Activated T-helper 1 cell treated with anti-CD3 and anti-CD28 coated beads, Interleukin-12 subunit alpha, Interleukin-12 subunit beta, Interleukin-2, Interleukin-4 antibody, amounts not matched to agents 30 ng/mL and 10 ng/mL and 1 ng/mL, durations not matched to agents 14 hours and 24 hours and 36 hours (primary cell): ENCODE measurements at regions of chr6 and their contacts with region 1.

Region 1: DNA sequence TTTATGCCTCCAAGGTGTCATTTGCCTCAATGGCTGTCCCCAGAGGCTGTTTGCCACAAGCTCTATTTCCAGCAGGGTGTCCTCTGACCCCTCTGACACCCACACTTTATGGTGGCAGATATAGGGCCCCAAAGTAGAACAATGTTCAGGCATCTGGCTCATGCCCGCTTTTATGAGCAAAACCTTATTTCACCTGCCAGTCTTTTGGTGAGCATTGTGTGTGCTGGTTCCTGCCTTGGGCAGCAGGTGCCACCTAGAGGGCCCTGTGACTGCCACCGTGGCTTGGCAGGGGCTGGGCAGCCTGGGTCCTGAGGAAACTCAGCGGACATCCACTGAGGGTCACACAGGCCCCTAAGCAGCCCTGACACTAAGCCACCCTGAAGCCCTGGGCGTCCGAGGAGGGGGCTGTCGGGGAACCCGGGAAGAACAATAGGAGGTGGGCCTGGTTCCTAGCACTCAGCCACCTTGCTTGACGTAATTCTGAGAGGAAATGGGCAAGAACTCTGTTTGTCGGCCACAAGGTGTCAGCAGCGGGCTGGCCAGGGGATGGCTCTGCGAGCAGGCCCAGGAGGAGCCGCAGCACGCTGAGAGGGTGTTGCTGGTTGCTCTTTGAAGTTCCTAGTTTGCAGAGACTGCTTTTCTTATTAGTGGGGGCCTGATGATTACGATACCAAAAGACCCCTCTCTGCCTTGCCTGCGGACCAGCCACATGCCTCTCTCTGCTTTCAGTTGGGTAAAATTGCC is 148.9 kb downstream of the SCML4 start:
- DNase-seq: peak; percentile 72
- H3K4me3 Mint-ChIP-seq: no peak overlapping the region
- H3K27ac Mint-ChIP-seq: no peak overlapping the region
- H3K4me1 Mint-ChIP-seq: peaks cover 25% of the 10 kb centered on the region
- H3K27me3 Mint-ChIP-seq: peaks cover 14% of the 10 kb centered on the region

Region 2: DNA sequence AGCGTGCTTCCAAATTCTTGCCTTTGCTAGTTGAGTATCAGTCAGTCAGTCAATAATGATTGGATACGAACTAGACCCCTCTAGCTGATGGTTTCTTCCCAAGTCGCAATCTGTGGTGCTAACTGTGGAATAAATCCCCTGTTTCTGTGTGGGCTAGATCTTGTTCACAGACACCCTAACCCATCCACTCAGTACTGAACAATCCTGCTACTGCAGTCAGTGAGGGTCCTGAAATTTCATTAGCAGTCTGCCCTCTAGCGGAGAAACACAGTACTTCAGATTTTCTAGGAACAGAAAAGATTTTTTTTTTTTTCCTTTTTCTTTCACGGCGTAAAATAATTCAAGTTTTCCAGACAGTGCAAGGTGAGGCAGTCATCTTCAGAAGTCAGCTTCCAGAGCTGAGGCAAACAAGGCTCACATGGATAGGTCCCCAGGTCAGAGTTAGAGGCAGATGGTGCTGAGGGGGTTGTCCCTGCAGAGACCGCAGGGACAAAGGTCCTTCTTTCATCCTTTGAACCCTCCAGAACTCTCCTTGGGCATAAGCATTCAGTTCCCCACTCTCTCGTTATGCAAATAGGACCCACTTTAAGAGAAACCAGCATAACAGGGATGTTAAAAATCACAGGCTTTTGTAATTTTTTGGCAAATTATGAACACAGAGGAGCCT is 29.3 kb after region 1 on chr6:
- intact Hi-C with region 1: loop called (anchors 1 kb)
- DNase-seq: no peak
- H3K4me3 Mint-ChIP-seq: no peak overlapping the region
- H3K27ac Mint-ChIP-seq: no peak overlapping the region
- H3K4me1 Mint-ChIP-seq: peaks cover 15% of the 10 kb centered on the region
- H3K27me3 Mint-ChIP-seq: peaks cover 1% of the 10 kb centered on the region

Region 3: DNA sequence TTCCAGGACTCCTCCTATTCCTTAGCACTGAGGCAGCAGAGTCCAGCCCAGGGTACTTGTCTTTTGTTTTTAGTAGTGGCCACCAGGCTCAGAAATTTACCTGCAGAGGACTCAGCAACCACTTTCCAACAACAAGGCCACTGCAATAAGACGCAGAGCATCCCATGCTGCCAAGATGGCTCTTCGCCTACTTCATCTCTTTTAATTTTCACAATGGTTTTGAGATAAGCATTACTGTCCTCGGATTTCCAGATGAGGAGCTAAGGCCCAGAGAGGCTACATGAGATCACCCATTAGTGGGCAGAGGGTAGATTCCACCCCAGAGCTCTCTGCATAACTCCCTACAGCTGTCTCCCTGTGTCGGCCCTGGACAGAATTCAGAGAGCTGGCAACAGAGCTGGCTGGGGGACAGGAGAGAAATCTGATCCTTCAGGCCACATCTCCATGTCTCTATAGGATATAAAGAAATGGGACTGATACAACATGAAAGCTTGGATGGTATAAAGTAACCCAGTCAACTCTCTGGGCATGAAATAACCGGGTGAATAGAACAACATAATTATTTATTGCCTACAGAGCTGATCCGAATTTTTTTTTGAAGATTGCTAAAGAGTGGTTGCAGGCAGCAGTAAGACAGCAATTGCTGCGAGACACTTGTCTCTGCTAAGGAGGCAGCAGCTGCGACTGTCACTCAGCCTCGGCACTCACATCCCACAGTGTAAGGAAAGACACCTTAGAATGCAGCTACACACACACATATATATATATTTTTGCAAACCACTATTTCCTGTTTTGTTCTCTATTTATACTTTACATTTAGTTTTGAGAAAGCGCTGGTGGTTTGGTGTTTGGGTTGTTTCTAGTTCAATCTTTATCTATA is 111.8 kb after region 1 on chr6:
- intact Hi-C with region 1: loop called (anchors 5 kb)
- DNase-seq: peak; percentile 40
- H3K4me3 Mint-ChIP-seq: peak overlapping the region; percentile 71
- H3K27ac Mint-ChIP-seq: no peak overlapping the region
- H3K4me1 Mint-ChIP-seq: peaks cover 57% of the 10 kb centered on the region
- H3K27me3 Mint-ChIP-seq: peaks cover 8% of the 10 kb centered on the region

Region 4: DNA sequence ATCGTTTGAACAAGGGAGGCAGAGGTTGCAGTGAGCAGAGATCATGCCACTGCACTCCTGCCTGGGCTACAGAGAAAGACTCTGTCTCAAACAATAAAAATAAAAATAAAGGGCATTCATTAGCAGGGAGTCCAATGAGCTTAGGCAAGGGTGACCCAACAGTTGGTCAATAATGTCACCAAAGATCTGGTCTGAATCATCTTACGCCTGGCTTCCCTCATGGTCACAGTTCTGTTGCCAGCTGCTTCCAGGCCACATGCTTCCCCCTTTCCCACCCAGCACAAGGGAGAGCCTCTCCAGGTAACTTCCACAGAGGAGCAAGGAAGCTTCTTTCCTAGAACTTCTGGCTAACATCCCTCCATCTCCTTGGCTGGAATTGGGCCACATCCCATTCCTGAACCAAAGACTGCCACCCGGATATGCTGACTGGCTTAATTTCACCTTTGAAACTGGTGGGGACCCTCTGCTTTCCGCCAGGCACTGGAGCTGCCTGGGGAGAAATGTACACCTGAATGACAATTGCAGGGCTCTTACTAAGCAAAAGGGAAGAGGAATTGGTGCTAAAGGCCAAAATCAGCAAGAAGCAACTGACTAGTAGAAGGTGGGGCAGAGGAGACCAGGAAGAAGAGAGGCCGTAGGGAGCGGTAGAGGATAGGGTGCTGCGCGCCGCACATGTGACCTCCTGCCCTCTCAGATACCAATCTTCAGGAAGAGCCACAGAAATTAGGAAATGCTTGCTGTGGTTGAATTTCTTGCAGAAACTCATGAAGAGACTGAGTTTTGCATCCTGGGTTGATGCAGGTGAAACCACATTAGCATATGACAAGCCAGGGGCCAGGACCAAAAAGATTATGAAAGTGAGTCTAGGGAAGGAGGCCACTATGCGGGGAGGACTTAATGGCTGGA is 157.2 kb after region 1 on chr6:
- intact Hi-C with region 1: no loop called
- DNase-seq: no peak
- H3K4me3 Mint-ChIP-seq: no peak overlapping the region
- H3K27ac Mint-ChIP-seq: peak overlapping the region; percentile 27
- H3K4me1 Mint-ChIP-seq: peaks cover 35% of the 10 kb centered on the region
- H3K27me3 Mint-ChIP-seq: no peaks in the 10 kb centered on the region

Region 5: GRCh38 chr6:107847844-107848802 is 173.0 kb after region 1 on chr6:
- intact Hi-C with region 1: loop called (anchors 1 kb)
- DNase-seq: peak; percentile 74
- H3K4me3 Mint-ChIP-seq: peak overlapping the region; percentile 69
- H3K27ac Mint-ChIP-seq: no peak overlapping the region
- H3K4me1 Mint-ChIP-seq: peaks cover 30% of the 10 kb centered on the region
- H3K27me3 Mint-ChIP-seq: peaks cover 15% of the 10 kb centered on the region

Region 6: GRCh38 chr6:107866606-107867301 is 191.6 kb after region 1 on chr6:
- intact Hi-C with region 1: loop called (anchors 1 kb)
- DNase-seq: no peak
- H3K4me3 Mint-ChIP-seq: no peak overlapping the region
- H3K27ac Mint-ChIP-seq: no peak overlapping the region
- H3K4me1 Mint-ChIP-seq: peaks cover 24% of the 10 kb centered on the region
- H3K27me3 Mint-ChIP-seq: peaks cover 4% of the 10 kb centered on the region

Region 7: GRCh38 chr6:108052706-108053105 is 377.5 kb after region 1 on chr6:
- intact Hi-C with region 1: loop called (anchors 1 kb)
- DNase-seq: no peak
- H3K4me3 Mint-ChIP-seq: no peak overlapping the region
- H3K27ac Mint-ChIP-seq: no peak overlapping the region
- H3K4me1 Mint-ChIP-seq: no peaks in the 10 kb centered on the region
- H3K27me3 Mint-ChIP-seq: no peaks in the 10 kb centered on the region